IMR-90 (cell line): ENCODE measurements at regions of chr10 and their contacts with region 1.

Region 1: DNA sequence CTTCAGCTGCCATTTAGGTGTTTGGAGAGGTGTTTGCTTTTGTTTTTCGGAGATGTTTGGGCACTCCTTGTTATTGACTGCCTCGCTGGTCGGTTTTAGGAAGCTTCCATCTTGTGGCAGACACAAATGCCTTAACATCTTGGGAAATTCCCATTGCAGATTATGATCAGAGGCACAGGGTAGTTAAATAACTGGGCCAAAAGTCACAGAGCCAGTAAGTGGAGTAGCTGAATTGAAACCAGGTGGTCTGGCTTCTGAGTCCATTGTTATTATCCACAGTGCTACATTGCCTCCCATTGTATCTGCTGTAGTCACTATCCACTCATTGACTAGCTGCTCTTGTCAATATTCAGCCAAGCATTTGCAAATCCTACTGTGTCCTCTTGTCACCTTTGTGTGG is 138.2 kb upstream of the PLPP4 start:
- DNase-seq: no peak
- ATAC-seq: no peak
- H3K4me3 ChIP-seq: no peak overlapping the region
- H3K27ac ChIP-seq: no peak overlapping the region
- H3K4me1 ChIP-seq: no peaks in the 10 kb centered on the region
- H3K27me3 ChIP-seq: no peaks in the 10 kb centered on the region
- CTCF ChIP-seq: no peak
- POLR2A ChIP-seq: no peak
- RAD21 ChIP-seq: no peak

Region 2: DNA sequence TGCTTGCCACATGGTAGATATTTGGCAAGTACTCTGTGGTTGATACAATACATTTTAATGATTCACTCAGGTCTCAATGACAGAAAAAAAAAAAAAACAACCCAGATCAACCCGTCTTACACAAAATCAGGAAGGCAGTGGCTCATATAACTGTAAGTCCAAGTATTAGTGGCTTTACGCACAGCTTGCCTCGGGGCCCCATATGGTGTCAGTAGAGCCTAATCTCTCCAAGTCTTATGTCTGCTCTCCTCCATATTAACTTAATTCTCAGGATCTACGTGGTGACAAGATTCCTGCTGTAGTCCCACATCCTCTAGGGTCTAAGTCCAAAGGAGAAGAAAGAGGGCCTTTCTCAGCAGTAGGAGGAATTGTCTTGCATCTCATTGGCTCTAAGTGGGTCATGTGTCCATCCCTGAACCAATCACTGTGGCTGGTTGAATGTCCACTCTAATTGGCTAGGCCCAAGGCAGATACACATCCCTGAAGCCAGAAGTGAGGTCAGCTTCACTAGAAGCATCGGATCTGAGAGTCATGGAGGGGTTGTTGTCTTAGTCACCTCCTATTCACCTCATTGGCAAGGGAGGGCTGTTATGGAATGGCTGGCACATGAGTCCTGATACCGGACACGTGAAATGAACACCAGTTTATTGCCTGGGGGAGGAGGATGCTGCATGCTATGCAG is 117.7 kb after region 1 on chr10:
- CTCF ChIA-PET with region 1: no interaction called
- POLR2A ChIA-PET with region 1: no interaction called
- dilution Hi-C with region 1: no loop called
- in situ Hi-C with region 1: no loop called
- intact Hi-C with region 1: no loop called
- DNase-seq: no peak
- ATAC-seq: no peak
- H3K4me3 ChIP-seq: no peak overlapping the region
- H3K27ac ChIP-seq: no peak overlapping the region
- H3K4me1 ChIP-seq: no peaks in the 10 kb centered on the region
- H3K27me3 ChIP-seq: no peaks in the 10 kb centered on the region
- CTCF ChIP-seq: no peak
- POLR2A ChIP-seq: no peak
- RAD21 ChIP-seq: no peak

Region 3: DNA sequence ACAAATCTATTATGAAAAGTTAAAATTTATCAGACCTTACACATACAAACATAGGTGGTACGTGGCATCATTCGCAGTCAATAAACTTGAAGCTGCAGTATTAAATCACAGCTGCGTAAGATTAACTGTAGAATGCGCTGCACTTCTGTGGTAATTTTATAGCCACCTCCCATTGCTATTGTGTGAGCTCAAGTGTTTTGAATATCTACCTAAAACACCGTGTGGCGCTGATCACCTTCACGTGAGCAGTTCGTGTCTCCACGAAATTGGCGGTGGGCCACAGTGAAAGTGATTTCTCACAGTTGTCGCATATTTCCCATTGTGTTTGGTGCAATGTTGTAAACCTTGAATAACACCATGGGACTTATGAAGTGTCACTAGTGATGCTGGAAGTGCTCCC is 240.9 kb after region 1 on chr10:
- CTCF ChIA-PET with region 1: no interaction called
- POLR2A ChIA-PET with region 1: no interaction called
- dilution Hi-C with region 1: no loop called
- in situ Hi-C with region 1: no loop called
- intact Hi-C with region 1: loop called (anchors 5 kb)
- DNase-seq: no peak
- ATAC-seq: no peak
- H3K4me3 ChIP-seq: no peak overlapping the region
- H3K27ac ChIP-seq: no peak overlapping the region
- H3K4me1 ChIP-seq: no peaks in the 10 kb centered on the region
- H3K27me3 ChIP-seq: no peaks in the 10 kb centered on the region
- CTCF ChIP-seq: no peak
- POLR2A ChIP-seq: no peak
- RAD21 ChIP-seq: no peak